ENCODE measurements at regions of chr9 and their contacts with region 1.

Region 1: DNA sequence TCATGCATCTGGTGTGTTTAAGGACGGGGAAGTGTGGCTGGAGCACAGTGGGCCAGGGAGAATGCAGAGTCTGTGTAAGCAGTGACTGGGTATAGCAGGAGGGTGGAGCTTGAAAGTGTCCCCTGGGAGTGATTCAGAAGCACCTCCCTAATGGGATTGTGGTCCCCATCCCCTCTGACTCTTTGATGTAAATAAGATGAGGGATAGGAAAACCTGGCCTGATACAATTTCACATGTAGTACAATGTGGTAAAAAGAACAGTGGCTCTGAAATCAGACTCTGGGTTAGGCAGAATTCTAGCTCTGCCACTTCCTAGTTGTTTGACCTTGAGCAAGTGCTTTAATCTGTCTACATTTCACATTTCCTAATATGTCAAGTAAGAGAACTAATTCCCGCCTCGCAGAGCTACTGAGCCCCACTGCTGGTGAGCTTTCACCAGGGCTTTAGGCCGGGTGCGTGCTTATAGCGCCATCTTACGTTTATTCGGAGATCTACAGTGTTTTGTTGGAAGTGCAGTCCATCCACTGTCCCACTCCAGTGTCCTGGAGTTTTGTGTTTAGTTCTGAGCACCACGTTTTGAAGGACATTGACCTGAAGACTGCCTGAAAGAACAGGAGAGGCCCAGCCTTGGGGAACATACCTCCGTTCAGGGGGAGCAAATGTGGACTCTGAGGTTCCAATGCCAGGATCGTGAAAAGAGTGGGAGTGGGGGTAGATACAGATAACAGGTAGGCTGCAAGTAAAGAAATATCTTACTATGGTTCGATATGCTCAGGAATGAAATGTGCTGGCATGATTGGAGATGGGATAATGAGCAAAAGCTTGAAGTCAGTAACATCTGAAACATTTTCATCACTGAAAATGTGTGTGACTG is 51.2 kb upstream of the TESK1 start:
- DNase-seq: peak; percentile 56 to 89 (median 78)

Region 2: GRCh38 chr9:35489313-35490154 is 64.4 kb before region 1 on chr9 and contains the start of gene RUSC2:
- intact Hi-C with region 1: loop called (anchors 2 kb)
- DNase-seq: peak; percentile 73 to 91 (median 83)

Region 3: DNA sequence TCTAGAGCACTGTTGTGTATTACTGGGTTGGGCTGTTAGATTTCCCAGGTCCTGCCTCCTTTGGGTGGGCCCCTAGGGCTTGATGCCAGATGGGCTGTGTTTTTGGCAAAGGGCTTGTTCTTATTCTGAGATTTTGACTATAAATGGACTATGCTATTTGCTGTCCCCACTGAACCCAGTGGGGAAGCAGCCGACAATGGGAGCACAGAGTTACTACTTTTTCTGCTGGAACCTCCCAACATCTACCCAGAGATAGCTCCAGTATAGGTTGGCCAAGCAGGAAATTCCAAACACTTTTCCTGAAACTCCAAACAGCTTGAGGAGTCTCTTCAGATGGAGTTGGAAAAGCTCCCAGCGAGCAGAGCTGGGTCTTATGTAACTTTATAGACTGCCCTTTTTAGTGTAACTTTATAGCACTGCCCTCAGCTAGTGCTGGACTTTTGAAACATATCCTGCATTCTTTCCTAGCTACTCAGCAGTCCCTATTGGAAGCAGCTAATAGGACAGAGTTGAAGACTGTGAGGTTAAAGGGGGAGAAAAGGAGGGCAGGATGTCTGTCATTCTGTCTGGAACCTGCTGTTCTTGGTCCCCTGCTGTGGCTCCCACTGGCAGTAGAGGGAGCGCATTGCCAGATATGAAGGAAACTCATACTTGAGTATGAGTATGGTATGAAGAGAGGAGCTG is 43.0 kb before region 1 on chr9:
- intact Hi-C with region 1: loop called (anchors 5 kb)
- DNase-seq: peak in 2 of 42 donors; percentile 21 to 22

Region 4: DNA sequence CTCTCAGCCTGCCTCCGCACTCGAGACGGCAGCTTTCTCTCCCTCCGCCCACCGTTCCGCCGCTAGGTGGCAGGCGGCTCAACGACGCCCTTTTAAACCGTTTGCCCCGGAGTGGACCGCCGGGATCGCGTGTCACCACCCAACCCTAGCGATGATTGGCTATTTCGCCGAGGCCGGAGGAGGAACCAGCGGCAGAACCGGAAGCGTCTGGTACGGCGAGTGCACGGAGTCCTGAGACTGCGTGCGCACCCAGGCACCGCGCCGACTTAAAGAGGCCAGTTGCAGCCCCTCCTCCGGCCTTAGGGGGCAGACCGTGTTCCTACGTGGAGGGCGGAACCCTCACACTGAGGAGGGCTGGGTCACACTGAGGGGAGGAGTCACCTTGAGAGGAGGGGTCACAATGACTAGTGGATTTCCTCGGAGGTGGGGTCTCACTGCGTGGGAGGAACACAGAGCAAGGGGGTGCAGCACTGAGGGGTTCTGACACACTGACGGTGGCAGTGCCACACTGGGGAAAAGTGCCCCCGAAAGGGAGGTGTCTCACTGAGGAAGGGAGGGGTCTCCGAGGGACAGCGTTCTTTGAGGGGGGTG is 50.2 kb after region 1 on chr9:
- intact Hi-C with region 1: loop called (anchors 10 kb)
- DNase-seq: peak; percentile 97 to 100 (median 99)